ENCODE measurements at regions of chr2 and their contacts with region 1.

Region 1: GRCh38 chr2:206159346-206160124 is at the starts of genes EEF1B2 and NDUFS1:
- DNase-seq: peak; percentile 99
- ATAC-seq: peak; percentile 97
- total RNA-seq, gene EEF1B2: 283 TPM
- total RNA-seq, gene NDUFS1: 468 TPM

Region 2: GRCh38 chr2:205814039-205814364 is 345.5 kb before region 1 on chr2:
- intact Hi-C with region 1: no loop called
- DNase-seq: no peak
- ATAC-seq: no peak

Region 3: DNA sequence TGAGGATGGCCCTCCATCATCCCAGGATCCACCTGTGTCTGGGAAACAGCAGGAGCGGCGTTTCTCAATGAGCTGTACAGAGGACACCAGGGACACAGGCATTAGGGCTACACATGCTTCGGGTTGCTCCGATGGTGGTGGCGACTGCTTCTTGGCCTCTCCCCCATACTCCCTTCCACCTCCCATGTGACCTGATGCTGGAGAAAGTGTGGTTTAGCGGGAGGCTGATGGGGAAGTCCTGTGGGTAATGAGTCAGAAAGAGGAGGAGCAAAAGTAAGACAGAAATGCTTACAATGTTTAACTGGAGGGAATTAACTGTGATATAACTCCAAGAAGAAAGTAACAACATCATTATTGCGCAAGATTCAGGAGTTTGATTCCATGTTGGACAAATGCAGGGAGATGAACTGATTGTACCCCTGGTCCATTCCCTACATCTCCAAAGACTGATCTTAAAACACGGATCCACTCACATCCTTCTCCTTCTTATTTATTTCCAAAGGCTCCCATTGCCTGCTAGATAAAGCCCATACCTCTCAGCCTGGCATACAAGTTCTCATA is 290.7 kb before region 1 on chr2:
- intact Hi-C with region 1: no loop called
- DNase-seq: no peak
- ATAC-seq: peak; percentile 59

Region 4: GRCh38 chr2:205995260-205995659 is 164.3 kb before region 1 on chr2:
- intact Hi-C with region 1: no loop called
- DNase-seq: no peak
- ATAC-seq: no peak

Region 5: GRCh38 chr2:206085742-206086445 is 73.6 kb before region 1 on chr2 and contains the start of gene INO80D:
- intact Hi-C with region 1: loop called (anchors 5 kb)
- DNase-seq: peak; percentile 90
- ATAC-seq: peak; percentile 88
- total RNA-seq, gene INO80D: 12.6 TPM

Region 6: GRCh38 chr2:206249714-206250591 is 90.4 kb after region 1 on chr2:
- intact Hi-C with region 1: no loop called
- DNase-seq: no peak
- ATAC-seq: no peak

Region 7: GRCh38 chr2:206260188-206261012 is 100.9 kb after region 1 on chr2:
- intact Hi-C with region 1: loop called (anchors 10 kb)
- DNase-seq: no peak
- ATAC-seq: peak; percentile 72

Measured in Right ventricle myocardium inferior (tissue), 1 donor.